Caco-2 (cell line): ENCODE measurements at regions of chr2 and their contacts with region 1.

Region 1: DNA sequence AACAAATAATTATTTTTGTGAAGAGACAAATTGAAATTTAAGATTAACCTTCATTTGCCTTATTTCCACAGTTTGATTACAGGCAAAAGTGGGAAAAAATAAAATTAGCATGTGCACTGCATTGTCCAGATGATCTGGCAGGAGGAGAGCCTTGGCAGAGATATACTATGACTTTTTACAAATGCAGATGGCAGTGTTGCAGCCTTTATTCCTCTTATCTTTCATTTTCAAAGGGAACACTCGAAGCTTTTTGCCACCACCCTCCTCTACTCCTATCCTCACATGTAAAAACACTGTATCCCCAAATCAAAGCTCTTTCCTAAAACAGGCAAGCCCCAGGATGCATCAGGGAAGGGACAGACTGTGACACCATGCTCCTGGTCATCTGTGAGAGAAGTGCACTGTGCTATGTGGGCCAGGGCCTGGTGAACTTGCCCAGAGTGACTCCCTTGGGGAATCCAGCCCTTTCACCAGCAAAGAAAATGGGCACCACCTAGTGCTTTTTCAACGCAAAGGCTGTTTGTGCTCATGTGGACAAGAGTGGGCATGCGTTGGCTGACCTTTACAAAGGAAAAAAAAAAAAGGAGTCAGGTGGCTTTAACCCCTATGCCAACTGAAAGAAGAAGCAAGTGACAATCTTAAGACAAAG is 74.7 kb upstream of the ETAA1 start:
- DNase-seq: peak; percentile 59 to 64
- H3K4me3 ChIP-seq: no peak overlapping the region
- H3K4me3 Mint-ChIP-seq: no peak overlapping the region
- H3K27ac Mint-ChIP-seq: no peak overlapping the region
- H3K4me1 ChIP-seq: no peaks in the 10 kb centered on the region
- H3K4me1 Mint-ChIP-seq: no peaks in the 10 kb centered on the region
- H3K27me3 ChIP-seq: no peaks in the 10 kb centered on the region
- H3K27me3 Mint-ChIP-seq: peaks cover 6% of the 10 kb centered on the region
- CTCF ChIP-seq: peak; percentile 39 to 64

Region 2: GRCh38 chr2:66429071-66429477 is 893.4 kb before region 1 on chr2:
- CTCF ChIA-PET with region 1: no interaction called
- POLR2A ChIA-PET with region 1: no interaction called
- intact Hi-C with region 1: loop called (anchors 5 kb)
- DNase-seq: peak in 1 of 2 experiments; percentile 56
- H3K4me3 ChIP-seq: no peak overlapping the region
- H3K4me3 Mint-ChIP-seq: no peak overlapping the region
- H3K27ac Mint-ChIP-seq: no peak overlapping the region
- H3K4me1 ChIP-seq: peaks cover 25% of the 10 kb centered on the region
- H3K4me1 Mint-ChIP-seq: peaks cover 16% of the 10 kb centered on the region
- H3K27me3 ChIP-seq: no peaks in the 10 kb centered on the region
- H3K27me3 Mint-ChIP-seq: no peaks in the 10 kb centered on the region
- CTCF ChIP-seq: peak; percentile 86 to 92

Region 3: GRCh38 chr2:66982766-66983165 is 339.7 kb before region 1 on chr2:
- CTCF ChIA-PET with region 1: no interaction called
- POLR2A ChIA-PET with region 1: no interaction called
- intact Hi-C with region 1: loop called (anchors 10 kb)
- DNase-seq: no peak
- H3K4me3 ChIP-seq: no peak overlapping the region
- H3K4me3 Mint-ChIP-seq: no peak overlapping the region
- H3K27ac Mint-ChIP-seq: no peak overlapping the region
- H3K4me1 ChIP-seq: no peaks in the 10 kb centered on the region
- H3K4me1 Mint-ChIP-seq: no peaks in the 10 kb centered on the region
- H3K27me3 ChIP-seq: no peaks in the 10 kb centered on the region
- H3K27me3 Mint-ChIP-seq: no peaks in the 10 kb centered on the region
- CTCF ChIP-seq: no peak

Region 4: DNA sequence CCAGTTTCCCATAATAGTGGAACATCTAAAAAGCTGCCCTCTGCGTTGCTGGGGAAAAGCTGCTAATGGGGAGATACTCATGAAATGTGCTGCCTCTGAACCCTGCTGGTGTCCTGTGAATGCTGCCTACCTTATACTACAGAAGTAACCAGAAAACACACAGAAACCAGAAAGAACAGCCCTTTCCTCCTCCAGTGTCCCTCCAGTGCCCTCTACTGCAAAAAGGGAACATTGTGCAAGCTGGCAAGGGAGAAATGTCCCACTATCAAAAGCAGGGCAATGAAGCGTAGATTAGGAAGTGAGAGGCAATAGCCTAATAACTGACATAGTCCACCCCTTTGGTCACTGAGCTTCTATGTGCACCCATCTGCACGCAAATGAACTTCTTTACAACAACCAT is 88.0 kb before region 1 on chr2:
- CTCF ChIA-PET with region 1: no interaction called
- POLR2A ChIA-PET with region 1: no interaction called
- intact Hi-C with region 1: loop called (anchors 2 kb)
- DNase-seq: peak in 1 of 2 experiments; percentile 47
- H3K4me3 ChIP-seq: no peak overlapping the region
- H3K4me3 Mint-ChIP-seq: no peak overlapping the region
- H3K27ac Mint-ChIP-seq: no peak overlapping the region
- H3K4me1 ChIP-seq: no peaks in the 10 kb centered on the region
- H3K4me1 Mint-ChIP-seq: no peaks in the 10 kb centered on the region
- H3K27me3 ChIP-seq: no peaks in the 10 kb centered on the region
- H3K27me3 Mint-ChIP-seq: peaks cover 6% of the 10 kb centered on the region
- CTCF ChIP-seq: peak; percentile 50 to 67

Region 5: DNA sequence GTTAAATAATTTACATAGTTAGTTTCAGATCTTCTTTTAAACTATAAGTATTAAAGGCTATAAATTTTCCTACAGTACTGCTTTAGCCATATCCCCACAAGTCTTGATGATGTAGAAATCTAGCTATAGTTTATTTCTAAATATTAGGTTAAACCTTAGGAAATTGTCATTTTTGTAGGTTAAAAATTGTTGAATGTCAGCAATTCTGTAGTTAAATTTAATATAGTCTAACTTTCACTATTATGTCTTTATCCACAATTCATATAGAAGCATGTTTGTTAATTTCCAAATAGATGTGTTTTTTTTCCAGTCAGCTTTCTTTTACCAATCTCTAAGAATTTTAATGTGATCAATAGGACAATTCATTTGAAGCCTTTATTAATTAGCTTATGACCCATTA is 274.4 kb after region 1 on chr2:
- CTCF ChIA-PET with region 1: no interaction called
- POLR2A ChIA-PET with region 1: no interaction called
- intact Hi-C with region 1: no loop called
- DNase-seq: no peak
- H3K4me3 ChIP-seq: no peak overlapping the region
- H3K4me3 Mint-ChIP-seq: no peak overlapping the region
- H3K27ac Mint-ChIP-seq: no peak overlapping the region
- H3K4me1 ChIP-seq: peaks cover 4% of the 10 kb centered on the region; the same call in 1 of the 2 replicates
- H3K4me1 Mint-ChIP-seq: no peaks in the 10 kb centered on the region
- H3K27me3 ChIP-seq: no peaks in the 10 kb centered on the region
- H3K27me3 Mint-ChIP-seq: peaks cover under 1% of the 10 kb centered on the region
- CTCF ChIP-seq: no peak

Region 6: DNA sequence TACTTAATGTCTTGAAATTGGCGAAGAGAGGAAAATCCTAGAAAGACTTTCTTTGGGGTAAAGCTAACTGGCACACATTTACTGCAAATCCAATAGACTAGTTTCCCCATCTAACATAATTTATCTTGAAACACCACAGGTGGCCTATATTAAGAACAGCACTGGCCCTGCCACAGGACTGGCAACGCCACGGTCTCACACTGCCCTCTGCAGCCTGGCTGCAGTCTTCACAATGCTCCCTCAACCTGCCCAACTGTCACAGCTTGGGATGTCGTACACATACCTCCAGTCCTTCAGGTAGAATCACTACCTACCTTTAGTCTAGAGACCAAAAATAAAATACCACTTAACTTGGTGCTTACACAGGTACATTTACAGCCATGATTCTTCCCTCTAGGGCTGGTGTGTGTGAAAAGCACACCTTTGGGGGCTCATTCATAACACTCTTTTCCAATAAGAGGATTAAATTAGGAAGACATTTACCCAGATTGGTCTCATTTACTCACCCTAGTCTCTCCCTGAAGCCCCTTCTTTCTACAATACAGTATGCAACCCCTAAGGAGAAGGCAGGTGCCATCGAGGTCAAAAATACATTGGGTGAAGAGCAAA is 518.1 kb after region 1 on chr2:
- CTCF ChIA-PET with region 1: no interaction called
- POLR2A ChIA-PET with region 1: no interaction called
- intact Hi-C with region 1: loop called (anchors 10 kb)
- DNase-seq: peak; percentile 60 to 68
- H3K4me3 ChIP-seq: no peak overlapping the region
- H3K4me3 Mint-ChIP-seq: no peak overlapping the region
- H3K27ac Mint-ChIP-seq: no peak overlapping the region
- H3K4me1 ChIP-seq: no peaks in the 10 kb centered on the region
- H3K4me1 Mint-ChIP-seq: no peaks in the 10 kb centered on the region
- H3K27me3 ChIP-seq: no peaks in the 10 kb centered on the region
- H3K27me3 Mint-ChIP-seq: peaks cover 3% of the 10 kb centered on the region
- CTCF ChIP-seq: peak; percentile 63 to 74